ENCODE measurements at regions of chr11 and their contacts with region 1.

Region 1: GRCh38 chr11:44634401-44635281 is 69.2 kb downstream of the CD82 start:
- DNase-seq: peak; percentile 52
- H3K4me3 Mint-ChIP-seq: no peak overlapping the region
- H3K27ac Mint-ChIP-seq: no peak overlapping the region
- H3K4me1 Mint-ChIP-seq: peaks cover 3% of the 10 kb centered on the region
- H3K27me3 Mint-ChIP-seq: peaks cover 19% of the 10 kb centered on the region

Region 2: DNA sequence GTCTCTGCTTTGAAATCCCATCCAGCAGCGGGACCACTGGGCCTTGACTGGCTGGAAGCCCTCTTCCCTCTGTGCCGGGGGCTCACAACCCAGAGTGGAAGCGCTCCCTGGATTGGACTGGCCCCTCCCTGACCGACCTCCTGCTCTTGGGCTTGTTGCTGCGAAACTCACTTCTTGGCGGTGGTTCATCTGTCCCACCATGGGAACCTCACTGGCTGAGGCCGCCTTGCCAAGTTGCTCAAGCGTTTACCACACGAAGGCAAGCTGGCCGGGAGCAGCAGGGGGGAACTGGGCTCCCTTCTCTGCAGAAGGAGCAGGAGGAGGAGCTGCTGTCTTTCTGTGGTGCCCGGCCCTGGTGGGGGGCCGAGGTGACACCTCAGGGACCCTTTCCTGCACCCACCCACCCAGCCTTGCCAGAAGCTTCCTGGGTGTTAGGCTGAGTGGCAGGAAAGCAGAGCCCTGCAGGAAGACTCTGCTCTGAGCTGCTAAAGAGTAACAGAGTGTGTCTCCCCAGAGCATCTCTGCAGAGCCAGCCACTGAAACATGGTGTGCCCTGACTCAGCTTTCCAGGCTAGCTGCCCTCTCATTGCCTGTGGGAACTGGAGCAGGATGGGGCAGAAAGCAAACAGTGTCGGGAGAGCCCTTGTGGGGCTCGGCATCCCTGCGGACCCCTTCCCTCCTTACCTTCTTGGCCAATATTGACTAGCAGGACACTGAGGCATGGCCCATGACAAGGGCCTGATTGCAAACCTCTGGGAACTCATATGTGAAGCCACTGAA is 236.2 kb before region 1 on chr11:
- intact Hi-C with region 1: no loop called
- DNase-seq: no peak
- H3K4me3 Mint-ChIP-seq: no peak overlapping the region
- H3K27ac Mint-ChIP-seq: no peak overlapping the region
- H3K4me1 Mint-ChIP-seq: no peaks in the 10 kb centered on the region
- H3K27me3 Mint-ChIP-seq: peaks cover 10% of the 10 kb centered on the region

Region 3: GRCh38 chr11:44680982-44681597 is 46.4 kb after region 1 on chr11:
- intact Hi-C with region 1: loop called (anchors 10 kb)
- DNase-seq: peak; percentile 94
- H3K4me3 Mint-ChIP-seq: peak overlapping the region; percentile 79
- H3K27ac Mint-ChIP-seq: peak overlapping the region; percentile 80
- H3K4me1 Mint-ChIP-seq: peaks cover 43% of the 10 kb centered on the region
- H3K27me3 Mint-ChIP-seq: peaks cover 3% of the 10 kb centered on the region